Pancreas (tissue), 10 donors: ENCODE measurements at regions of chr15 and their contacts with region 1.

Region 1: DNA sequence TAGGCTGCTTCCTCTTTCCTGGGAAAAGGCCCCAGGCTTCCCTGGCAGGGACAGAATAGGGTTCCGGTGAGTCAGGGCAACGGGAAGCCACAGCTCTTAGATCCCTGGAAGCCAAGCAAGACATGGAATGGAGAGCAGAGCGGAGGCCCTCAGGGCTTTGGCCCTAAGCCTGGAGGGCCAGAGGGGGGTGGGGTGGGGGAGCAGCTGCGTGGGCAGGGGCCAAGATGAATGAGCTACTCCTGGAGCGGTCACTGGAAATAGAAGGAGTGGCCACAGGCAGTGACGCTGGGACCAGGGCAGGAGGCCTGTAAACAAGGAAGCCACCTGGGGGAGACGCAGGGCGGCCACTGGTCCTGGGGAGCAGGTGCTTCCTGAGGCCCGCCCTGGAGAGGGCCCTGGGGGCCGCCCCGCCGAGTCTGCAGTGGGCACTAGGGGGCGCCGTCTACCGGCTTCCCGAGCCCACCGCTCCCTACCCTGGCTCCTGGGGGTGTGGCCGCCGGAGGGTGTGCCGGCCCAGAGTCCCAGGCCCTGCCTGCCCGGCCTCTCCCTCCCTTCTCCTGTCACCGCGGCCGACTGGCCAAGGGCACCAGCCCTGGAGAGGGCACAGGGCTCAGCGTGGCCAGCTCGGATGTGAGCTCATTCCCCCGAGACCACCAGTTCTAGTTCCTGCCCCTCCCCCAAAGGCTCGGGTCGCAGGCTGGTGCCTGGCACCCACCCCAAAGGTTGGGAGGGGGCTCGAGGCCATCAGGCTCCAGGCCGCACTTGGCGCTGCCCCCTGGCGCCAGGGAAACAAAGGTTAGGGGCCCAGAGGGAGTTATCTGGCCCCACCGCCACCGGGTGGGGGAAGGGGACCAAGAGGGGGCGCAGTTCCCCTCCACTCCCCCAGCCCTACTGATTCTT is 12.1 kb downstream of the VPS18 start:
- DNase-seq: peak; percentile 92 to 97 (median 94)
- ATAC-seq: peak; percentile 87 to 90 (median 88)
- H3K4me3 ChIP-seq: peak overlapping the region in 3 of 4 donors; percentile 16 to 52 (median 40)
- H3K27ac ChIP-seq: peak overlapping the region; percentile 84 to 93 (median 90)
- H3K4me1 ChIP-seq: peaks cover 6 to 19% (median 11%) of the 10 kb centered on the region in 3 donors
- H3K27me3 ChIP-seq: no peaks in the 10 kb centered on the region
- CTCF ChIP-seq: peak; percentile 80 to 88 (median 86)

Region 2: GRCh38 chr15:40743921-40744814 is 162.2 kb before region 1 on chr15:
- intact Hi-C with region 1: no loop called
- DNase-seq: no peak
- ATAC-seq: peak in 2 of 4 donors; percentile 51 to 53
- H3K4me3 ChIP-seq: no peak overlapping the region
- H3K27ac ChIP-seq: no peak overlapping the region
- H3K4me1 ChIP-seq: no peaks in the 10 kb centered on the region
- H3K27me3 ChIP-seq: no peaks in the 10 kb centered on the region
- CTCF ChIP-seq: no peak

Region 3: GRCh38 chr15:40769274-40770146 is 136.8 kb before region 1 on chr15 and contains the start of gene C15orf62:
- intact Hi-C with region 1: no loop called
- DNase-seq: peak in 3 of 6 donors; percentile 34 to 57 (median 37)
- ATAC-seq: peak; percentile 27 to 52 (median 48)
- H3K4me3 ChIP-seq: no peak within 1 kb of the TSS
- H3K27ac ChIP-seq: peak within 1 kb of the TSS; percentile 22 to 51 (median 38)
- H3K4me1 ChIP-seq: peaks cover 3 to 12% (median 8%) of the 10 kb centered on the region in 3 donors
- H3K27me3 ChIP-seq: no peaks in the 10 kb centered on the region
- CTCF ChIP-seq: no peak
- total RNA-seq, gene C15orf62: 0.06 to 0.23 (median 0.12) TPM in 5 of 6 donors, not detected in the other

Region 4: GRCh38 chr15:41022487-41023090 is 116.2 kb after region 1 on chr15:
- intact Hi-C with region 1: loop called in 2 of 3 experiments (anchors 5 to 10 kb)
- DNase-seq: peak in 1 of 6 donors; percentile 36
- ATAC-seq: peak in 3 of 4 donors; percentile 71 to 74 (median 73)
- H3K4me3 ChIP-seq: no peak overlapping the region
- H3K27ac ChIP-seq: no peak overlapping the region
- H3K4me1 ChIP-seq: no peaks in the 10 kb centered on the region
- H3K27me3 ChIP-seq: no peaks in the 10 kb centered on the region
- CTCF ChIP-seq: peak in 2 of 4 donors; percentile 41 to 49

Region 5: GRCh38 chr15:41180206-41180789 is 274.0 kb after region 1 on chr15:
- intact Hi-C with region 1: loop called in 1 of 3 experiments (anchors 5 kb)
- DNase-seq: no peak
- ATAC-seq: no peak
- H3K4me3 ChIP-seq: no peak overlapping the region
- H3K27ac ChIP-seq: no peak overlapping the region
- H3K4me1 ChIP-seq: no peaks in the 10 kb centered on the region
- H3K27me3 ChIP-seq: no peaks in the 10 kb centered on the region
- CTCF ChIP-seq: no peak

Region 6: DNA sequence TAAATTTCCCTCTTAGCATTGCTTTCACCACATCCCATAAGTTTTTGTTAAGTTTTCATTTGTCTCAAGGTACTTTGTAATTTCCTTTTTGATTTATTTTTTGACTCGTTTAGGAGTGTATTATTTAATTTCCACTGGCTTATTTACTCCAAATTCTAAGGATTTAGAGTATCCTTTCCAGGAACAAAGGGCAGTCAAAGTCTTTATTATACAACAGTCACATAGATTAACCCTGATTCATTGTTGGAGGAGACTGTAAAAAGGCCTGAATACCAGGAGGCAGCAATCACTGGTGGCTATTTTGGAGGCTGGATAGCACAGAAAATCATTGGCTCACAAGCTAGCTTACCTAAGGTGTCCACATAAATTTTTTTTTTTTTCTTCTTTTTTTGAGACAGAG is 386.2 kb after region 1 on chr15:
- intact Hi-C with region 1: no loop called
- DNase-seq: no peak
- ATAC-seq: no peak
- H3K4me3 ChIP-seq: no peak overlapping the region
- H3K27ac ChIP-seq: no peak overlapping the region
- H3K4me1 ChIP-seq: no peaks in the 10 kb centered on the region
- H3K27me3 ChIP-seq: no peaks in the 10 kb centered on the region
- CTCF ChIP-seq: no peak

Region 7: DNA sequence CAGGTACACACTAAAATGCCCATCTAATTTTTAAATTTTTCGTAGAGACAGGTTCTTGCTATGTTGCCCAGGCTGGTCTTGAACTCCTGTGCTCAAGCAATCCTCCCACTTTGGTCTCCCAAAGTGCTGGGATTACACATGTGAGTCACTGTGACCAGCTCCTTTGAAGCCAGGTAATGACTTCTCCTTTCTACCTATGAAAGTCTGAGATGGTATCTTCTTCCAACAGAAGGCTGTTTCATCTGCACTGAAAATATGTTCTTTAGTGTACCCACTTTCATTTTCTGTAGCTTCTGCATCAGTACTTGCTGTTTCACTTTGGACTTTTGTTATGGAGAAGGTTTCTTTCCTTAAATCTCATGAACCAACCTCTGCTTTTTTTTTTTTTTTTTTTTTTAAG is 417.3 kb after region 1 on chr15:
- intact Hi-C with region 1: loop called in 1 of 3 experiments (anchors 10 kb)
- DNase-seq: no peak
- ATAC-seq: no peak
- H3K4me3 ChIP-seq: no peak overlapping the region
- H3K27ac ChIP-seq: no peak overlapping the region
- H3K4me1 ChIP-seq: no peaks in the 10 kb centered on the region
- H3K27me3 ChIP-seq: no peaks in the 10 kb centered on the region
- CTCF ChIP-seq: no peak